Activated CD4-positive, alpha-beta memory T cell treated with anti-CD3 and anti-CD28 coated beads, Interleukin-2, amount 10 ng/mL, durations not matched to agents 7 days and 5 days (primary cell): ENCODE measurements at regions of chr1 and their contacts with region 1.

Region 1: DNA sequence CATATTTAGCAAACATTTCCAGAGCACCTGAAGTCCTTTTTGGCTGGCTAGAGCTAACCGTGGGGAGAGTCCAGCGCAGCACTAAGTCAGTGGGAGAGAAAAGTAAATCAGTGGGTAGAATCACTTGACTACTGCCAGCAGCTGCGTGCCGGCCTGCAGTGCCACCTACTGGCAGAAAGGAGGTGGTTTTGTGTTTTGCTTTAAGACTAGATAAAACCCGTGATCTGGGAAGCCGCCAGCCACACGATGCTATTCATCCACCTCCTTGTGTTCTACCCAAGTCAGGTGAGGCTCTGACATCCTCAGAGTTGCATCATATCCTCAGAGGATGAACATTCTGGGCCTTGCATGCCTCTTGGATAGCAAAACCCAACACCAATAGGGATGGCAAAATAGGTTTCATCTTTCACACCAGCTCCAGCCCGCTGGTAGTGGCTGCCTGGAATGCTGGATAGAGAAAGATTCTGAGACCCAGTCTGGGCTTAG is 14.1 kb upstream of the HEYL start:
- DNase-seq: peak; percentile 80
- H3K4me3 Mint-ChIP-seq: no peak overlapping the region
- H3K27ac Mint-ChIP-seq: no peak overlapping the region
- H3K4me1 Mint-ChIP-seq: peaks cover 12% of the 10 kb centered on the region
- H3K27me3 Mint-ChIP-seq: peaks cover 7% of the 10 kb centered on the region

Region 2: DNA sequence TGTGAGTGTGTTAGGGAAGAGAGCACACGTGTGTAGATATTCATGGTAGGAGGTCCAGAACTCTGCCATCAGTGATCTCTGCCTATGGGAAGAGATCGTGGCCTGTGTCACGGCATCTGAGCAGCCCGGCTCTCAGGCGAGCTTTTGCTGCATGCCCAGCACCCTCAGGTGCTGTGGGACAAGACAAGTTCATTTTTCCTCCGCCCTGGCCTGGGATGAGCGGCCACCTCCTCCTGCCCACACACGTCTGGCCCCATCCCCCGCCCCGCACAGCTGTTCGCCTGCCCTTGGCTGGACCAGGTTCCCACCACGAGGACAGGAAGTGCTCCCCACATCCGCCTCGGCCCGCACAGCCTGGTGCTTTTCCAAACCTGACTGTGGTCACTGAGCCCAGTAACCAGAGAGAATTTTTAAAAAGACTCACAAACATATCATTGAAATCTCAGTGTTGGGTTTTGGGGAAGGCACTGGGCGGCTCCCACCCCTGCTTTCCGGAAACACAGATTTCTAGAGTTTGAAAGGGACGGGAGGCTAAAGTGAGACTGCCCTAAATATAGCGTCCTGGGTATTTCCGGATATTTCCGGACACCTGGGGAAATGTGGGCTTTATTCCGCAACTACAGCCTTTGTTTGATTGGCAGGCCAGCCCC is 144.1 kb before region 1 on chr1:
- CTCF ChIA-PET with region 1: no interaction called
- POLR2A ChIA-PET with region 1: no interaction called
- DNase-seq: peak; percentile 35
- H3K4me3 Mint-ChIP-seq: no peak overlapping the region
- H3K27ac Mint-ChIP-seq: peak overlapping the region; percentile 19
- H3K4me1 Mint-ChIP-seq: peaks cover 19% of the 10 kb centered on the region
- H3K27me3 Mint-ChIP-seq: peaks cover 17% of the 10 kb centered on the region

Region 3: GRCh38 chr1:39596163-39596562 is 57.4 kb before region 1 on chr1:
- CTCF ChIA-PET with region 1: interaction called, 10 read pairs
- POLR2A ChIA-PET with region 1: no interaction called
- DNase-seq: no peak
- H3K4me3 Mint-ChIP-seq: no peak overlapping the region
- H3K27ac Mint-ChIP-seq: no peak overlapping the region
- H3K4me1 Mint-ChIP-seq: peaks cover 6% of the 10 kb centered on the region
- H3K27me3 Mint-ChIP-seq: peaks cover 9% of the 10 kb centered on the region

Region 4: GRCh38 chr1:39640861-39641260 is 12.7 kb before region 1 on chr1:
- CTCF ChIA-PET with region 1: interaction called, 17 read pairs
- POLR2A ChIA-PET with region 1: no interaction called
- DNase-seq: no peak
- H3K4me3 Mint-ChIP-seq: no peak overlapping the region
- H3K27ac Mint-ChIP-seq: no peak overlapping the region
- H3K4me1 Mint-ChIP-seq: peaks cover 2% of the 10 kb centered on the region
- H3K27me3 Mint-ChIP-seq: peaks cover 41% of the 10 kb centered on the region

Region 5: GRCh38 chr1:39691262-39692151 is 37.9 kb after region 1 on chr1 and contains the start of gene HPCAL4:
- CTCF ChIA-PET with region 1: interaction called, 14 read pairs
- POLR2A ChIA-PET with region 1: interaction called, 3 read pairs
- DNase-seq: peak; percentile 91
- H3K4me3 Mint-ChIP-seq: peak within 1 kb of the TSS; percentile 74
- H3K27ac Mint-ChIP-seq: no peak within 1 kb of the TSS
- H3K4me1 Mint-ChIP-seq: peaks cover 28% of the 10 kb centered on the region
- H3K27me3 Mint-ChIP-seq: peaks cover 46% of the 10 kb centered on the region
- total RNA-seq, gene HPCAL4: 2.4 to 2.6 TPM

Region 6: GRCh38 chr1:39799770-39800470 is 146.3 kb after region 1 on chr1:
- CTCF ChIA-PET with region 1: interaction called, 13 read pairs
- POLR2A ChIA-PET with region 1: no interaction called
- DNase-seq: peak; percentile 72
- H3K4me3 Mint-ChIP-seq: peak overlapping the region; percentile 63
- H3K27ac Mint-ChIP-seq: peak overlapping the region; percentile 80
- H3K4me1 Mint-ChIP-seq: peaks cover 13% of the 10 kb centered on the region
- H3K27me3 Mint-ChIP-seq: no peaks in the 10 kb centered on the region